Activated CD4-positive, alpha-beta T cell treated with anti-CD3 and anti-CD28 coated beads for 36 hours (primary cell): ENCODE measurements at regions of chr4 and their contacts with region 1.

Region 1: GRCh38 chr4:575281-576141 is 584 bp downstream of the TMEM271 start:
- DNase-seq: peak; percentile 47
- ATAC-seq: peak; percentile 32
- H3K4me3 Mint-ChIP-seq: no peak overlapping the region
- H3K27ac Mint-ChIP-seq: no peak overlapping the region
- H3K4me1 Mint-ChIP-seq: peaks cover 9% of the 10 kb centered on the region
- H3K27me3 Mint-ChIP-seq: peaks cover 56% of the 10 kb centered on the region

Region 2: DNA sequence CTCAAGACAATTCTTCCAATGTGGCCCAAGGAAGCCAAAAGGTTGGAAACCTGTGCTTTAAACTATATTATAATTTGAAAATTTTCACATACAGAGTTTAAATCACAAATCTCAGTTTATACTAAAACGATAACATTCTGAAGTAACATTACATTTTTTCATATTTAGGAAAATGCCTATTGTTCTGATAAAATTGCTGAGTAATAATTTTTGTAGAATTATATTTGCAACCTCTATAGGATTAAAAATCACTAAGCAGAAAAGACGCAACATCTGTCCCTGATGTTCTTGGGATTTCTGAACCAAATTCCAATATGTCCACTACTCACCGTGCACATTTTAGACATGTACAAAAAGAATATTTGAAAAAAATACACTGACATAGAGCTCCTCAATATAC is 280.8 kb before region 1 on chr4:
- CTCF ChIA-PET with region 1: no interaction called
- POLR2A ChIA-PET with region 1: no interaction called
- intact Hi-C with region 1: loop called in 1 of 2 experiments (anchors 10 kb)
- DNase-seq: no peak
- ATAC-seq: no peak
- H3K4me3 Mint-ChIP-seq: no peak overlapping the region
- H3K27ac Mint-ChIP-seq: no peak overlapping the region
- H3K4me1 Mint-ChIP-seq: no peaks in the 10 kb centered on the region
- H3K27me3 Mint-ChIP-seq: no peaks in the 10 kb centered on the region

Region 3: GRCh38 chr4:1410491-1411325 is 835.2 kb after region 1 on chr4:
- CTCF ChIA-PET with region 1: no interaction called
- POLR2A ChIA-PET with region 1: no interaction called
- intact Hi-C with region 1: loop called in 1 of 2 experiments (anchors 5 kb)
- DNase-seq: peak; percentile 76
- ATAC-seq: peak; percentile 68
- H3K4me3 Mint-ChIP-seq: no peak overlapping the region
- H3K27ac Mint-ChIP-seq: no peak overlapping the region
- H3K4me1 Mint-ChIP-seq: peaks cover 5% of the 10 kb centered on the region
- H3K27me3 Mint-ChIP-seq: peaks cover 57% of the 10 kb centered on the region